A549 (cell line): ENCODE measurements at regions of chr2 and their contacts with region 1.

Region 1: DNA sequence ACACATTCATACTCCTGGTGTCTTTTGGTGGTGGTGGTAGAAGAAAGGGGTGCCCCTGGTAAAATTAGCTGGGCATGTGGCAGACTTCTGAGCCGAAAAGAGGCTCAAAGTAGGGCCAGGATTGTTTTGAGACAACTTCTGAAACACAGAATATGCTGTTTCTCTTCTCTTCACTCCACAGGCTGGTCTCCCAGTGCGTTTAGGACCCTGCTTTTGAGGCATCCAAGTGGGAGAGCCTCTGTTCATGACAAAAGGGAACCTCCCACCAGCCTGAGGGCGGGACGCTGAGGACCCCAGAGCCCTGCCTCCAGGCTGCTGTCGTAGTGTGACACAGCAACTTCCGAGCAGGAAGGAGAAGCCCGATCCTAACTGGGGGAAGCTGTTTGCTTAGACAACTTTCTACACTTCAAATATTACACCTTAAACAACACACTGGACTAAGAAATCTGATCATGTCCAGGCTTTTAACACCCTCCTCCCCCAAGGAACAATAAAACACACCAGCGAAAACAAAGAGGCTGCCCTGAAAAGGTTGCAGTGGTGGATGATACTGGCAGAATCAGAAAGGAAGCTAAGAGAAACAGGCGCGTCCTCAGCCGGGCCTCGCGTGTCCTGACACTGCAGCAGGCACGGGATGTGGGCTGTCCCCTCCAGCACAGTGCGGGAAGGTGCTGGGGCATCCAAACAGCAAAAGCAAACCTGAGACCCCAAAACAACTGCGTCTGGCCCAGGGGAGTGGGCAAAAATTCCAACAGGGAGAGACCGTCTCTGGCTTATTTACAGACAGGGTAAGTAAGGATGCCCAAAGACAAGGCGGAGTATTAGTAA is 9.3 kb downstream of the SERTAD2 start:
- DNase-seq: peak; percentile 91 to 95
- ATAC-seq: peak; percentile 85 to 94
- H3K4me3 ChIP-seq: peak overlapping the region; percentile 44
- H3K27ac ChIP-seq: peak overlapping the region; percentile 93 to 95
- H3K4me1 ChIP-seq: peaks cover 87% of the 10 kb centered on the region
- CTCF ChIP-seq: no peak; the same call in 2 of the 3 replicates
- EP300 ChIP-seq: no peak
- POLR2A ChIP-seq: peak; percentile 56
- RAD21 ChIP-seq: no peak

Region 2: DNA sequence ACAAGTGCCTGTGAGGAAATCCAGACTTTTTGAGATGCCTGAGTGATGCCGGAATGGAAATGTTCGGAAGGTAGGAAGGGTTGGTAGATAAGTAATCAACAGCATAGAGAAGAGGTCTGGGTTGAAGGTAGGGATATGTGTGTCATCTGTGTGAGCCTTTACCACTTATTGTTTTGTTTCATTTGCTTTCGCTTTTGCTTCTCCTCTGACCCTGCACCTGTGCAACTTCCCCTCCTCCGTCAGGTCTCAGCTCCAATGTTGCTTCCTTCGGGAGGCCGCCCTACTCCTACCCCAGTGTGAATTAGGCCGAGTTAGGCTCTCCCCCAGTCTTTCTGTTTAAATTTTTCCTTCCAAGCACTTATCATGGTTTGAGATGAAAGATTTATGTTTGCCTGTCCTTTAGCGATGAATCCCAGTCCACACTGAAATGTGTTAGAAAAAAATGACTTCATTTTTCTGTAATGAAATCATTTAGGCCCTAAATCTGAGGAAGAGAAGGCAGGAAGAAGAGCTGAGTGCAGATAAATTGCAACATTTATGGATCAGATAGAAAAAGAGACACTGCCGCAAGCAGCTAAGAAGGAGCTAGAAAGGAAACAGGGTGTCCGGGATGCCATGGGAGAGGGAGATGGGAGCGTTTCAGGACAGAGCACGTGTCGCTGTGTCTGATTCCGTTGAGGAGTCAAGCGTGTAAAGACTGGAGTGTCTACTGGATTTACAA is 360.6 kb before region 1 on chr2:
- CTCF ChIA-PET with region 1: no interaction called
- POLR2A ChIA-PET with region 1: no interaction called
- DNase-seq: no peak
- ATAC-seq: no peak
- H3K4me3 ChIP-seq: no peak overlapping the region
- H3K27ac ChIP-seq: no peak overlapping the region
- H3K4me1 ChIP-seq: no peaks in the 10 kb centered on the region
- CTCF ChIP-seq: no peak
- EP300 ChIP-seq: no peak
- POLR2A ChIP-seq: no peak
- RAD21 ChIP-seq: no peak

Region 3: DNA sequence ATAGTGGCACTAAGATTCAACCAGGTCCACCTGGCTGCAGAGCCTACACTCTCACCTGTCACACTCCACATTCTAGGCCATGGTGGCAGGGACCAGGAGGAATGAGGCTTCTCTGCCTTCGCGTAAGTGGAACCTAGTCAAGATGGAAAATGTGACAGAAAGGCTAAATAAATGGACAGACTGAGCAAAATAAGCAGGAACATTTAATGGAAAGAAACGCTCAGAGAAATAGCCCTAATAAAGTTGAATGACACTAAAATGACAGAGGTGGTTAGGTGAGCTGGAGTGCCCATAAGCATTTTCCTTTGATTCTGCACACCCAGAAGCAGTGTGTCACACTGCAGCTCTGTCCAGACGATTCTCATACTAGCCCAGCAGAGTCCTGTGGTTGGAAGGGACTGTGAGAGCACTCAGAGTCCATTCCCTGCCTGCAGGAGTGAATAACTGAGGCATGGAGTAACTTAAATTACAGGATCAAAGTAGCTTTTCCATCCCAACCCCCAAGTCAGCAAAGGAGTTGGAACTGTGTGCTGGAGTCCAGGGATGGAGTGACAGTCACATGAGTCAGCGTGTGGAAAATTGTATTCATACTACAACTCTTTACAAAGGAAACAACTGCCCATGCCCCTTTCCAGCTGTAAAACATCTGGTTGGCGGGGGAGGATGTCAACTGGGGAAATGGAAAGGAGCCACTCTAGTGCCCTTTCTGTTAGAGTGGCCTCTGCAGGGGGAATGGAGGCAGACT is 295.8 kb before region 1 on chr2:
- CTCF ChIA-PET with region 1: no interaction called
- POLR2A ChIA-PET with region 1: no interaction called
- DNase-seq: no peak
- ATAC-seq: no peak
- H3K4me3 ChIP-seq: no peak overlapping the region
- H3K27ac ChIP-seq: no peak overlapping the region
- H3K4me1 ChIP-seq: 0 out of 3 replicates have a peak, but pooled peaks cover 3% of the 10 kb centered on the region
- CTCF ChIP-seq: no peak
- EP300 ChIP-seq: no peak
- POLR2A ChIP-seq: no peak
- RAD21 ChIP-seq: no peak

Region 4: DNA sequence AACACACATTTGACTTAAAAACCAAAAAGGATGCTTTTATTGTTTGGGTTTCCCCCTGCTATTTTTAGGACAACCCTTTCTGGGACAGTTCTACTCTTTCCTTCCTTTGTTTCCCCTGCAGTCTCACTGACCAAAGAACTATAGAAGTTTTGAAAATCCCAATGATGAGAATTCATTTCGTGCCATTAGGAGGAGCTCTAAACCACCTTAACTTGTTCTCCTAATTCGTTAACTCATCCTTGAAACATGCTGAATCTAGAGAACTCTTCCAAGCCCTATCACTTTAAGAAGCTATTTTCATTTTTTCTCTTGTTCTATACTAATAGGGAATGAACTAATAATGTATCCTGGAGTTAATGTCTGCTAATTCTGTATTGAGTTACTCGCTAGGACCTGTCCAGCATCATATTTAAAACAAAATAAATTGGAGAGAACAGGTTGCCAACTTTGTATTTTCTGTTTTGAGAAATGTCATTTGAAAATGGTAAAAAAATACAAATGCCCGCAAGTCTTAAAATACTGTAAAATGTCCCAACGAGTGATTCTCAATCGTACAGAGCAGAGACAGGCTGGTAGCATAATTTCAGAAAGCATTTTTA is 57.4 kb before region 1 on chr2:
- CTCF ChIA-PET with region 1: interaction called, 18 read pairs
- POLR2A ChIA-PET with region 1: interaction called, 3 read pairs
- DNase-seq: peak; percentile 60 to 68
- ATAC-seq: peak; percentile 82 to 83
- H3K4me3 ChIP-seq: no peak overlapping the region
- H3K27ac ChIP-seq: no peak overlapping the region
- H3K4me1 ChIP-seq: no peaks in the 10 kb centered on the region
- CTCF ChIP-seq: peak; percentile 91
- EP300 ChIP-seq: no peak
- POLR2A ChIP-seq: no peak
- RAD21 ChIP-seq: peak; percentile 83 to 89

Region 5: DNA sequence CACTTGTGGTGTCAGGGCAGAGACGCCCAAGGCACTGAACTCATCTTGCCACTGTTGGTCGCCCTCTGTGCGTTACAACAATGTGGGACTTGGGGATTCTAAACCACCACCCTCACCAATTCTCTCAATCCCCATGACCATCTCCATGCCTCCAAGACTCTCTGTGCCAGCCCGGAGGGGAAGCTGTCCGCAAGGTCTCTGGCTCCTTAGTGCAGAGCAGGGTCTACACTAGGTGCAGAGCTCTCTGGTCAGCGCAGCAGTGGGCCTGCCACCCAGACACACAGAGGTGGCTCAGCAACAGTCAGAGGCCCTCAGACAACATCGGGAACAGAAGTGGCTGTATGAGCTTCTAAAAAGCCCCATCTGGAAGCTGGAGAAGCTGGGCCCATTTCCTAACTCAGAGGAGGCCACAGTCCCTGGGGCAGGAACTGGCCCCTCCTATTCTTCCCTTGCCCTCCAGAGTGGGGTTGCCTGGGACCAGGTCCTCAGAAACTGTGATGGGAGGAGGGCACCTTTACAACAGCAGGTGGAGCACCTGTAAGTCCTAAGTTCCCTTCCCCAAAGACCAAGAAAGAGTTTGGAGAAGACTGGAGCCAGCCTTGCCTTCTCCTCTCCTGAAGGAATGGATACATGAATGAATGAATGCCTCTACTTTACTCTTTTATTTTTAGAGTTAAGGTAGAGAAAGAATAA is 28.4 kb before region 1 on chr2:
- CTCF ChIA-PET with region 1: interaction called, 13 read pairs
- POLR2A ChIA-PET with region 1: interaction called, 4 read pairs
- DNase-seq: no peak
- ATAC-seq: no peak
- H3K4me3 ChIP-seq: no peak overlapping the region
- H3K27ac ChIP-seq: no peak overlapping the region
- H3K4me1 ChIP-seq: no peaks in the 10 kb centered on the region
- CTCF ChIP-seq: no peak
- EP300 ChIP-seq: no peak
- POLR2A ChIP-seq: no peak
- RAD21 ChIP-seq: no peak

Region 6: DNA sequence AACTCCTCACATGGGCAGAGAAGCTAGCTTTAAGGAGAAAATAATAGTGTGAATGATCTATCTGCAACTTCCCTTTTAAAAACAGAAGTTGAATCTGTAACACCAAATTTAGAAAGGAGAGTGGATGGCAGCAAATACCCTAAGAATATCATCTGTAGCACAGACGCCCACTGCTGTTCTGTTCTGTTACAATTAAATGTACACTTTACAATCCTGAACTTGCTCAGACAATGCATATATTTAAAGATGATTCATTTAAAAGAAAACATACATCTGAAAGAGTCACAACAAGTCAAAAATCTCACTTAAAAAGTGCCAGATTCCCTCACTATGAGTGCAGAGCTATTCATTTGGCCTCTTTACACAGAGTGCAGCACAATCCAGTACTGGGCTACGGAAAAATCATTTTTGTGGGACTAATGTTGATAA is 17.4 kb after region 1 on chr2:
- CTCF ChIA-PET with region 1: interaction called, 25 read pairs
- POLR2A ChIA-PET with region 1: interaction called, 102 read pairs
- DNase-seq: no peak
- ATAC-seq: no peak
- H3K4me3 ChIP-seq: no peak overlapping the region
- H3K27ac ChIP-seq: no peak overlapping the region
- H3K4me1 ChIP-seq: peaks cover 4% of the 10 kb centered on the region; the same call in 1 of the 3 replicates
- CTCF ChIP-seq: no peak
- EP300 ChIP-seq: no peak
- POLR2A ChIP-seq: no peak
- RAD21 ChIP-seq: no peak

Region 7: DNA sequence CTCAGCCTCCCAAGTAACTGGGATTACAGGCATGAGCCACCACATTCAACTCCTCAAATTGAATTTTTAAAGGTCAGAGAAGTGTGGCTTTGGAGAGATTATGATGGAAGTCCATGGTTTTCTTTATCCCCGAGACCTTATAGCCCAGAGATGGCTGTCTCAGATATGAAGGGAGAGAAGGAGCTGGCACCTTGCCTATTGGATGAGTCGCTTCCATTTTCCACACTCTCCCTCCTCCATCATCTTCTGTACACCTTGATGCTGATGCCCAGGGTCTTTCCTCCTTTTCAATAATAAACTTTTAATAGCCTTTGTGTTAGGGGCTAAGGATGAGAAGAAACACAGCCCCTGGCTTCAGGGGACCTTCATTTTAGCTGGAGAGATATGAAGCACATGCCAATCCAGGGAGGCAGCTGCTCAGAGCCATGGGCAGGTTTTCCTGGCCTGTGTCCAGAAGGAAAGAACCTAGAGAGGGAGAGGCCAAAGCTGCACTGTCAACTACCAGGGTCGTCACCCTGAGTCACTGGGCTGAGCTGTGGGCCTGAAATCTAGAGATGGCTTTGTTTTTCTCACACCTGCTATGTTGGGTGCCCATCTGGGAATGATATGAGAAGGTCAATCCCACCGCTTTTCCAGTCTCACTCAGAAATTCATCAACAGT is 155.3 kb after region 1 on chr2:
- CTCF ChIA-PET with region 1: no interaction called
- POLR2A ChIA-PET with region 1: no interaction called
- DNase-seq: no peak
- ATAC-seq: no peak
- H3K4me3 ChIP-seq: no peak overlapping the region
- H3K27ac ChIP-seq: no peak overlapping the region
- H3K4me1 ChIP-seq: peaks cover 19% of the 10 kb centered on the region
- CTCF ChIP-seq: no peak
- EP300 ChIP-seq: no peak
- POLR2A ChIP-seq: no peak
- RAD21 ChIP-seq: no peak

Region 8: DNA sequence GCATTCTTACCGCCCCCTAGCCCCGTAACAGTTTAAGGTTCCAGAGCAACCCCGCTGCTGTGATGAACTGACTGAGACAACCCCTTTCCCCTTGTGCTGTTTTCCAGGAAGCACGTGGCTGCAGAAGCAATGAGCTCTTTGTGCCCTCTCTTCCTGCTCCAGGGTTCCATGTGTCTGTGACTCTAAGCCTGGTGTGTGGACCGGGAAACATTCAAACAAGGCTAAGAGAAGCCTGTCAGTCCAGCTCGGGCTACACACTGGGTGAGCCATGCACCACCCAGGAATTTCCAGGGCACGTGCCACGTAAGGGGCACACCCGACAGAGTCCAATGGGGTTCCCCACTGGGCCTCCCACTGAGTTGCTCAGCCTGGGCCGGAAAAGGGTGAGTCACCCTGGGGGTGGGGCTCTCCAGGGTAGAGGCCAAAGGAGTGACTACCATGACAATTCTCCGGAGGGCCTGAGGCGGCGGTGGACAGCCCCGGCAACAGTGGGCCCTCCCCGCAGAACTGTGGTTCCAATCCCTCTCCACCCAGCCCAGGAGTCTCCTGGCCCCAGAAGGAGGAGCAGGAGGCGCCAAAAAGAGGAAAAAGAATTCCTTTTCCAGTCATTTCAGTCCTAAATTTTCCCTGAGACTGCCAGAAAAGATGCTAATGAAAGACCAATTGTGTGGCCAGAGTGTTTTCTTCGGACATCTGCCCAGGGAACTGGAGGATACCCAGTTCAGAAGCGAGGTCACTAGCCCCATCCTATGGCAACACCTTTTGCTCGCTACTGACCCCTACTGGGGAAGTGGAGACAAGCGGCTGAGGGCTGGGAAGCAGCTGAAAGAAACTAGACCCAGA is 187.0 kb after region 1 on chr2:
- CTCF ChIA-PET with region 1: interaction called, 19 read pairs
- POLR2A ChIA-PET with region 1: interaction called, 7 read pairs
- DNase-seq: peak; percentile 97 to 98
- ATAC-seq: peak; percentile 95 to 97
- H3K4me3 ChIP-seq: peak overlapping the region; percentile 11; the same call in 1 of the 3 replicates
- H3K27ac ChIP-seq: peak overlapping the region; percentile 65 to 89
- H3K4me1 ChIP-seq: peaks cover 36% of the 10 kb centered on the region
- CTCF ChIP-seq: peak; percentile 95
- EP300 ChIP-seq: peak; percentile 22 to 59; a peak in 2 of 5 replicates
- POLR2A ChIP-seq: no peak
- RAD21 ChIP-seq: peak; percentile 68 to 71

Region 9: GRCh38 chr2:64865073-64865830 is 220.9 kb after region 1 on chr2:
- CTCF ChIA-PET with region 1: interaction called, 65 read pairs
- POLR2A ChIA-PET with region 1: interaction called, 11 read pairs
- DNase-seq: peak; percentile 69 to 76
- ATAC-seq: peak; percentile 86 to 95
- H3K4me3 ChIP-seq: peak overlapping the region; percentile 62
- H3K27ac ChIP-seq: peak overlapping the region; percentile 85 to 92
- H3K4me1 ChIP-seq: peaks cover 20% of the 10 kb centered on the region
- CTCF ChIP-seq: peak; percentile 99
- EP300 ChIP-seq: no peak
- POLR2A ChIP-seq: no peak
- RAD21 ChIP-seq: peak; percentile 69 to 99

Region 10: GRCh38 chr2:65514555-65515195 is 870.3 kb after region 1 on chr2:
- CTCF ChIA-PET with region 1: no interaction called
- POLR2A ChIA-PET with region 1: no interaction called
- DNase-seq: no peak
- ATAC-seq: no peak
- H3K4me3 ChIP-seq: no peak overlapping the region
- H3K27ac ChIP-seq: no peak overlapping the region
- H3K4me1 ChIP-seq: 0 out of 3 replicates have a peak, but pooled peaks cover 4% of the 10 kb centered on the region
- CTCF ChIP-seq: no peak
- EP300 ChIP-seq: no peak
- POLR2A ChIP-seq: no peak
- RAD21 ChIP-seq: no peak